ENCODE measurements at regions of chr1 and their contacts with region 1.

Region 1: DNA sequence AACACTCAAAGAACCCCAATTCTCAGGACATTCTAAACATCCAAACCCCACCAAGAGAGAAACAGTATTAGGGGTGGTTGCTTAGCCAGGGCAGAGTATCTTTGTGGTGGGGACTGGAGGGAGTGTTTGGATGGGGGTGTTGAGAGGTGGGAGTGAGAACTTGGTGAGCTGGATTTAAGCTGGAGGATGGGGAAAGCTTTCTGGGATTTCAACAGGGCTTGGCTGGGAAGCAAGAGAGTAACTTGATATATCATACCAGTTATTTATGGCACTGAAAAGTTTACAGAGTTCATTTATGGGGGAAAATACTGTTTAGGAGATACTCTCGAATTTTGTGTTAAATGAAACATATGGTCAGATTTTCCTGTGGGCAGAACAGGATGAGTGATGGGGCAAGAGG is 6.8 kb upstream of the CNIH3 start:
- DNase-seq: no peak
- ATAC-seq: no peak

Region 2: DNA sequence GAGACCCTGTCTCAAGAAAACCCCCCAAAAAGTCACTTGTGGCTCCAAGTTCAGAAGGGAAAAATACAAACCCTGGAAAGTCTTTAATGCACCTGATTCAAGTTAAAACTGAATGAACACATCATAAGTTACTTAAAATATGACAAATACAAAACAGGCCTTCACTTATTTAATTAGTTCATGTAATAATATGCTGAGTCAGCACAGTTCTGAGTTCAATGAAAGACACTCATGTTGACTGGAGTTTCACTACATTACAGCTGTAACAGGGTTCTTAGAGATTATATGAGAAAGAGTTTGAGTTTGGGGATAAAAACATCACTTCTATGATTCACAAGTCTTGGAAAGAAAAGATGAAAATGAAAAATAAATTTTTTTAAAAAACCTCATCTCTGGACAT is 375.3 kb before region 1 on chr1:
- intact Hi-C with region 1: loop called (anchors 5 kb)
- DNase-seq: no peak
- ATAC-seq: no peak